ENCODE measurements at regions of chr1 and their contacts with region 1.

Region 1: DNA sequence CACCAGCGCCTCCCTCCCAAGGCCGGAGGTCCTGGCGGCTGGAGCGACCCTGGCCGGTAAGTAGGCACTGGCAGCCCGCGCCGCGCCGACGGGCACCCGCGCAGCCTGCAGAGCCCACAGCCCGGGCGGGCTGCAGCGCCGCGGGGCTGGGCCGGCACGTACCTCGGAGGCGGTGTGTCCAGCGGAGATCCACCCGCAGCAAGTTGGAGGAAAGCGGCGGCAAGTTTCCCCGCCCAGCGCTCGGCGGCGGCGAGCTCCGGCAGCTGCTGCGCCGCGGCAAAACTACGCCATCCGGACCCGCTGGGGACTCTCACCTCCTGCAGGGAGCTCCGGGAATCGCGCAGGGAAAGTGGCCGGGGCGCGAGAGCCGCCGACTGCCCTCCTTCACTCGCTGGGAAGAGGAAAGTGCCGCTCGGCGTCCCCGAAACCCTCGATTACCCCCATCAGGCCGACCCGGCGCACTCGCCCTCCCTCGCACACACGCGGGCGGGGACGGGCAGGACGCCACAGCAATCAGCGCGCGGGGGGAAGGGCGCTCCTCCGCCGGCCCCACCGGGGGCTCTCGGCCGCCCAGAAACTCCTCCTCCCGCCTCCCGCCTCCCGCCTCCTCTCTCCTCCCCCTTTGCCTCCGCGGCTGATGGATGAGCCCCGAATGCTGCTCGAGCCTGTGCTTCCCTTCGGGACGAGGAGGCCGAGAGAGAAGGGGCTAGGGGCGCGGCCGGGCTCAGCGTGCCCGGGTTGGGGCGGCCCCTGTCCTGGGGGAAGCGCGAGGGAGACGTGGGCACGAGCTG is at the start of gene TGFBR3:
- DNase-seq: peak; percentile 50 to 95
- H3K4me3 ChIP-seq: peak within 1 kb of the TSS; percentile 64 to 90
- H3K27ac ChIP-seq: peak within 1 kb of the TSS; percentile 83 to 95
- H3K4me1 ChIP-seq: peaks cover 0 to 10% of the 10 kb centered on the region in 2 donors
- H3K27me3 ChIP-seq: no peaks in the 10 kb centered on the region
- CTCF ChIP-seq: peak; percentile 52 to 60 (median 52)
- total RNA-seq, gene TGFBR3: 127 TPM

Region 2: DNA sequence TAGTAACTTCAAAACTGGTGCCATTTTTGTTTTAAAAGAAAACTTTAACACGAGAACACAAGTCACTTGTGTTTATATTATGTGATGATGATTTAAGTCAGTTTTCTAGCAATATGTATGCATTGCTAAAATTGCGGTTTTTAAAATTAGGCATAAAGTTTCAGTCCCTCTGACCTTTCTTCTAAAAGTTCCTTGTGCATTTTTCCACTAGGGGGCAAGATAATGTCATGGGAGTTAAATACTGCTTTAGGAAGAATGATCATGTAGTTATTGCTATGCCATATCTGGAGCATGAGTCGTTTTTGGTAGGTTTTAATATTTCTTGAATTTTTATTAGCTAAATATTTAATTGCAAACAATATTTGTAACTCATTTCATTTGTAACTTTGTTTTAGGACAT is 374.5 kb before region 1 on chr1:
- intact Hi-C with region 1: loop called (anchors 2 kb)
- DNase-seq: no peak
- H3K4me3 ChIP-seq: no peak overlapping the region
- H3K27ac ChIP-seq: no peak overlapping the region
- H3K4me1 ChIP-seq: no peaks in the 10 kb centered on the region
- H3K27me3 ChIP-seq: no peaks in the 10 kb centered on the region
- CTCF ChIP-seq: peak; percentile 41 to 57 (median 55)

Region 3: GRCh38 chr1:91569411-91570119 is 316.3 kb before region 1 on chr1:
- intact Hi-C with region 1: loop called (anchors 5 kb)
- DNase-seq: peak; percentile 62 to 93
- H3K4me3 ChIP-seq: no peak overlapping the region
- H3K27ac ChIP-seq: peak overlapping the region; percentile 64 to 76
- H3K4me1 ChIP-seq: peaks cover 0 to 10% of the 10 kb centered on the region in 2 donors
- H3K27me3 ChIP-seq: no peaks in the 10 kb centered on the region
- CTCF ChIP-seq: no peak

Region 4: GRCh38 chr1:91697416-91697815 is 188.5 kb before region 1 on chr1:
- intact Hi-C with region 1: loop called (anchors 5 kb)
- DNase-seq: no peak
- H3K4me3 ChIP-seq: no peak overlapping the region
- H3K27ac ChIP-seq: peak overlapping the region in 1 of 2 donors; percentile 30
- H3K4me1 ChIP-seq: peaks cover 0 to 27% of the 10 kb centered on the region in 2 donors
- H3K27me3 ChIP-seq: no peaks in the 10 kb centered on the region
- CTCF ChIP-seq: no peak

Region 5: DNA sequence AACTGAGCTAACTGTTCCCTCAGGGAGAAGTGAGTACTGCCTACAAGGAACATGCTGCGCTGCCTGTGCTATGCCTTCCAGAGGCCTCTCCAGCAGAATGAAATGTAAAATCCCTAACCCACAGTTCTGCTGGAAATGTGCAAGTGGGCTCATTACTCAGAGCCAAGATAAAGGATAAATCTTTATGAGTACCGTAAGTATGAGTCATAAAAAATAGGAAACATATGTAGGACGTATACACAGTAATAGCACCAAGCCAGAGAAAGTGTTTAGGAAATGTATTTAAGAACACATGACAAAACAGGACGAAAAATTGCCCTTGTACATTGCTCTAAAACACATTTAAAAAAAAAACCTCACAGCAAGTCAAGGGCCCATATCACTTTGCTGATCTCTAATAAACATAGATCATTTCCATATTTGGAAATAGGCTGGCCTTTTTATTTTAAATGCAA is 104.5 kb before region 1 on chr1:
- intact Hi-C with region 1: loop called (anchors 10 kb)
- DNase-seq: peak in 1 of 2 donors; percentile 41
- H3K4me3 ChIP-seq: peak overlapping the region in 1 of 2 donors; percentile 17
- H3K27ac ChIP-seq: peak overlapping the region; percentile 77 to 85
- H3K4me1 ChIP-seq: peaks cover 0 to 34% of the 10 kb centered on the region in 2 donors
- H3K27me3 ChIP-seq: no peaks in the 10 kb centered on the region
- CTCF ChIP-seq: no peak

Region 6: GRCh38 chr1:91851130-91852010 is 34.5 kb before region 1 on chr1:
- intact Hi-C with region 1: loop called (anchors 2 kb)
- DNase-seq: peak; percentile 28 to 94
- H3K4me3 ChIP-seq: peak overlapping the region; percentile 20 to 54
- H3K27ac ChIP-seq: peak overlapping the region; percentile 65 to 79
- H3K4me1 ChIP-seq: peaks cover 0 to 18% of the 10 kb centered on the region in 2 donors
- H3K27me3 ChIP-seq: no peaks in the 10 kb centered on the region
- CTCF ChIP-seq: no peak

Region 7: GRCh38 chr1:92201973-92202372 is 316.1 kb after region 1 on chr1:
- intact Hi-C with region 1: no loop called
- DNase-seq: no peak
- H3K4me3 ChIP-seq: no peak overlapping the region
- H3K27ac ChIP-seq: no peak overlapping the region
- H3K4me1 ChIP-seq: no peaks in the 10 kb centered on the region
- H3K27me3 ChIP-seq: no peaks in the 10 kb centered on the region
- CTCF ChIP-seq: no peak